ENCODE measurements at regions of chr14 and their contacts with region 1.

Region 1: DNA sequence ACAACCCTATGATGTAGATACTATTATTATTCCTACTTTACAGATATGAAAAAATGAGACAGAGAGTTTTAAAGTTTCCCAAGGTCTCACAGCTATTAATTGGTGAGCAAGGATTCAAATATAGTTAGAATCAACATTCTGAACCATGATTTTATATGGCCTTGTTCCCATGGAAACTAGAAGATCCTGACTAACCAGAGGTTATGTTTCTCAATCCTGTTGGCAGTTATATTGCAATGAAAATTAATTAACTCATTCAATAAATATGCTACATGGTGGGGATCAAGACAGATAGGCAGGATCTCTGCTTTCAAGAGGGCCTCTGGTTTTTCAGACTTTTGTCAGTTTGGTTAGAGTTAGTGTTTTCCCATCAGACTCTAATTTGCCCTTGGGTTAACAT is 9.3 kb upstream of the FUT8 start:
- DNase-seq: no peak
- ATAC-seq: no peak
- H3K4me3 ChIP-seq: no peak overlapping the region
- H3K27ac ChIP-seq: no peak overlapping the region
- H3K4me1 ChIP-seq: no peaks in the 10 kb centered on the region
- H3K27me3 ChIP-seq: no peaks in the 10 kb centered on the region
- CTCF ChIP-seq: no peak

Region 2: DNA sequence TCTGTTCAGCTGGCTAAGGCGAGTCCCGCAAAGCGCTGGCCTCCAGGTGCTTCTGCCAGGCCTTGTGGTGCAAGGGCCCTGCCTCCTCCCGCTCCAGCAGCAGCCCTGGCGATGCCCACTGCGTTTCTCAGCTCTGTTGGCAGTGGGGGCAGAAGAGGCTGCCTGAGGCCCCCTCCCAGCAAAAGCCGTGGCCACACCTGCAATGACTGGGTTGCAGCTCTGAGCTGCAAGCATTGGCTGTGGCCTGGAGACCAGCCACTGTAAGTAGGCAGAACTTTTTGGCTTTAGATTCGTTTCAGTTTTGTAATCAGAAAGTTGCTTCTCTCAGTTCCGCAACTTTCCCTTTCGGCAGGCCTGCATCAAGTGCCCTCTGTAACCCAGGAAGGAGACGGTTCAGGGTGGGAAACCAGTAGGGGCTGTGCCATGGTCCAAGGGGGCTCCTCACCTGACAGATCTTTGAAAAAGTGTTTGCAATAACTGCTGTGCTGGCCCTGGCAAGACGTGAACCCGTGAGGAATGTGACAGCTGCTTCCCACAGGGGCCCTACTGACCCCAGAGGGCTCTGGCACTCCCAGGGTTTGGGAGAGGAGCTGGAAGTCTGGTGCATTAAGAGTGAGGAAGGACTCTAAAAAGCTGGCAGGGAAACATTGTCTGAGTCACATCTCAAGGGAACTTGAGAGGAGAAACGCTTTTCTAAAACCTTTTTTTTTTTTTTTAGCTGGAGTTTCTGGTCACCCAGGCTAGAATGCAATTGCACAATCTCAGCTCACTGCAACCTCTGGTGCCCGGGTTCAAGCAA is 246.5 kb before region 1 on chr14:
- CTCF ChIA-PET with region 1: no interaction called
- POLR2A ChIA-PET with region 1: interaction called, 13 read pairs
- in situ Hi-C with region 1: no loop called
- intact Hi-C with region 1: no loop called
- DNase-seq: no peak
- ATAC-seq: no peak
- H3K4me3 ChIP-seq: no peak overlapping the region
- H3K27ac ChIP-seq: no peak overlapping the region
- H3K4me1 ChIP-seq: no peaks in the 10 kb centered on the region
- H3K27me3 ChIP-seq: no peaks in the 10 kb centered on the region
- CTCF ChIP-seq: no peak

Region 3: DNA sequence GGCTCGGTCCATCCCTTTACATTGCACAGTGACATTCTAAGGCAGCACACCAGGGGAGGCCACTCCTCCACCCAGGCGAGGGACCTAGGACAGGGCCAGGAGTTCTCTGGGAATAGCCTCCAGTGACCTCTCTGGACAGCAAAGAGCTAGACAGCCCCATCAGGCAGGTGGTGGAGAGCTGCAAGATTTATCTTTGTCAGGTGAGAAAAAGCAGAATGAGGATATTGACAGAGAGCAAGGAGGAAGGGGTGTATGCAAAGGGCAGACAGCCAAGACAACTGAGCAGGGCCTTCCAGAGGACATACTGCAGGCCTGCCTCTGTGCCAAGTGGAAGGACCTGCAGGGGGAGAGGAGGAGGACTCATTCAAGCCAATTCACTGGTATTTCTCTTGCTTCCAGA is 188.5 kb before region 1 on chr14:
- CTCF ChIA-PET with region 1: no interaction called
- POLR2A ChIA-PET with region 1: no interaction called
- in situ Hi-C with region 1: no loop called
- intact Hi-C with region 1: no loop called
- DNase-seq: no peak
- ATAC-seq: no peak
- H3K4me3 ChIP-seq: no peak overlapping the region
- H3K27ac ChIP-seq: no peak overlapping the region
- H3K4me1 ChIP-seq: no peaks in the 10 kb centered on the region
- H3K27me3 ChIP-seq: no peaks in the 10 kb centered on the region
- CTCF ChIP-seq: no peak

Region 4: GRCh38 chr14:65422088-65422834 is 19.0 kb after region 1 on chr14:
- CTCF ChIA-PET with region 1: no interaction called
- POLR2A ChIA-PET with region 1: interaction called, 10 read pairs
- in situ Hi-C with region 1: no loop called
- intact Hi-C with region 1: no loop called
- DNase-seq: no peak
- ATAC-seq: no peak
- H3K4me3 ChIP-seq: no peak overlapping the region
- H3K27ac ChIP-seq: no peak overlapping the region
- H3K4me1 ChIP-seq: peaks cover 10% of the 10 kb centered on the region; the same call in 1 of the 2 replicates
- H3K27me3 ChIP-seq: no peaks in the 10 kb centered on the region
- CTCF ChIP-seq: no peak

Measured in Panc1 (cell line).